Naive thymus-derived CD4-positive, alpha-beta T cell (primary cell): ENCODE measurements at regions of chr7 and their contacts with region 1.

Region 1: GRCh38 chr7:114033475-114033874 is 114.7 kb upstream of the PPP1R3A start:
- DNase-seq: no peak
- ATAC-seq: no peak
- H3K4me3 ChIP-seq: no peak overlapping the region
- H3K4me3 Mint-ChIP-seq: no peak overlapping the region
- H3K27ac ChIP-seq: no peak overlapping the region
- H3K27ac Mint-ChIP-seq: peak overlapping the region in 1 of 9 donors; percentile 26
- H3K4me1 ChIP-seq: no peaks in the 10 kb centered on the region
- H3K4me1 Mint-ChIP-seq: no peaks in the 10 kb centered on the region
- H3K27me3 ChIP-seq: no peaks in the 10 kb centered on the region
- H3K27me3 Mint-ChIP-seq: peaks cover 0 to 4% (median 0%) of the 10 kb centered on the region in 5 donors

Region 2: GRCh38 chr7:115229401-115230105 is 1196.1 kb after region 1 on chr7:
- CTCF ChIA-PET with region 1: no interaction called
- POLR2A ChIA-PET with region 1: no interaction called
- intact Hi-C with region 1: loop called in 1 of 2 experiments (anchors 5 kb)
- DNase-seq: peak in 2 of 9 donors; percentile 2 to 18
- ATAC-seq: peak; percentile 37
- H3K4me3 ChIP-seq: no peak overlapping the region
- H3K4me3 Mint-ChIP-seq: no peak overlapping the region
- H3K27ac ChIP-seq: no peak overlapping the region
- H3K27ac Mint-ChIP-seq: peak overlapping the region in 1 of 9 donors; percentile 42
- H3K4me1 ChIP-seq: no peaks in the 10 kb centered on the region
- H3K4me1 Mint-ChIP-seq: peaks cover 0 to 21% (median 9%) of the 10 kb centered on the region in 7 donors
- H3K27me3 ChIP-seq: no peaks in the 10 kb centered on the region
- H3K27me3 Mint-ChIP-seq: peaks cover 0 to 11% (median 9%) of the 10 kb centered on the region in 5 donors